Caco-2 (cell line): ENCODE measurements at regions of chr19 and their contacts with region 1.

Region 1: GRCh38 chr19:45862564-45863334 is at the start of gene SYMPK:
- DNase-seq: peak; percentile 99
- H3K4me3 ChIP-seq: peak within 1 kb of the TSS; percentile 67
- H3K4me3 Mint-ChIP-seq: peak within 1 kb of the TSS; percentile 98
- H3K27ac Mint-ChIP-seq: peak within 1 kb of the TSS; percentile 95
- H3K4me1 ChIP-seq: no peaks in the 10 kb centered on the region
- H3K4me1 Mint-ChIP-seq: peaks cover 14% of the 10 kb centered on the region
- H3K27me3 ChIP-seq: no peaks in the 10 kb centered on the region
- H3K27me3 Mint-ChIP-seq: no peaks in the 10 kb centered on the region
- CTCF ChIP-seq: no peak
- total RNA-seq, gene SYMPK: 81.8 and 85.0 TPM in 2 replicates

Region 2: GRCh38 chr19:45439569-45440254 is 423.0 kb before region 1 on chr19:
- CTCF ChIA-PET with region 1: no interaction called
- POLR2A ChIA-PET with region 1: no interaction called
- intact Hi-C with region 1: no loop called
- DNase-seq: peak; percentile 69 to 89
- H3K4me3 ChIP-seq: peak overlapping the region; percentile 61
- H3K4me3 Mint-ChIP-seq: peak overlapping the region; percentile 84
- H3K27ac Mint-ChIP-seq: peak overlapping the region; percentile 88
- H3K4me1 ChIP-seq: peaks cover 20% of the 10 kb centered on the region
- H3K4me1 Mint-ChIP-seq: peaks cover 21% of the 10 kb centered on the region
- H3K27me3 ChIP-seq: no peaks in the 10 kb centered on the region
- H3K27me3 Mint-ChIP-seq: no peaks in the 10 kb centered on the region
- CTCF ChIP-seq: peak; percentile 95 to 99

Region 3: DNA sequence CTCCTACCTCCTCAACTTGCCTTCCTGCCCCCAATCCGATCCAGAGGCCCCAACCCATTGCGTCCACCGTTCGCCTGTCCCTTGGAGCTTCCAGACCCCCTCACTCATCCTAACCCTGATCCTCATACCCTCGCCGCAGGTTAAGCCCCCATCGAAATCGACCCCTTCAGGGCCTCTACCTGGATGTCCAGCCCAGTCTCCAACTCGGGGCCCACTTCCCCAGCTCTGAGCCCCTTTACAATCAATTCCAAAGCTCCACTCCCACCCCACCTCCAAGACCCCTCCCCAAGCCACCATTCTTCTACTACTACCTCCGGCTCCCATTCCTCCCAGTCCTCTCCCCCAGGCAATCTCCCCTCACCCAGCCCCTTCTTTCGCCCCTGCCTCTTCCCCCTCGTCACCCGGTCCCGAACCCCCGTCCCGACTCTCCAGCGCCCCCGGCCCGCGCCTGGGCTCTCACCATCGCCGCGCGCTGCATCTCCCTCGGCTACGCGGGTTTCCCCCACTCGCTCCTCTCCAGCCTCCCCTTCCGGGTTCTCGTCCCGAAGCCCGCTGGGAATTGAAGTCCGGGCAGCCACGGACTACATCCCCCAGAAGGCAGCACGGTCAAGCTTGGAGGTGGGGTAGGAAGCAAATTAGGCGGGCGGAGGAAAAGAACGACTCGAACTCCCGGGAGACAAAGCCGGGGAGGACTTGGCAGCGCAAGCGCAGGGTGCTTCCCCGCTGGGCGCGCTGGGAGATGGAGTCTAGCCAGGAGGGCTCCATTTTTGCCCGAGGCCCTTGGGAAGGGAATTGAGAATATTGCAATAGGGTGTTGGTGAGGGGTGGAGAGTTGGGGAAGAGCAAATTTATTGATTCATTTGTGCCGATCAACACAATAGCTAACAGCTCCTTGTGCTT is 132.1 kb before region 1 on chr19 and contains the start of gene FBXO46:
- CTCF ChIA-PET with region 1: no interaction called
- POLR2A ChIA-PET with region 1: no interaction called
- intact Hi-C with region 1: loop called (anchors 2 kb)
- DNase-seq: peak; percentile 97 to 99
- H3K4me3 ChIP-seq: peak within 1 kb of the TSS; percentile 57
- H3K4me3 Mint-ChIP-seq: peak within 1 kb of the TSS; percentile 86
- H3K27ac Mint-ChIP-seq: peak within 1 kb of the TSS; percentile 73
- H3K4me1 ChIP-seq: peaks cover under 1% of the 10 kb centered on the region
- H3K4me1 Mint-ChIP-seq: peaks cover 8% of the 10 kb centered on the region
- H3K27me3 ChIP-seq: no peaks in the 10 kb centered on the region
- H3K27me3 Mint-ChIP-seq: no peaks in the 10 kb centered on the region
- CTCF ChIP-seq: peak in 1 of 2 experiments; percentile 44
- total RNA-seq, gene FBXO46: 31.0 and 37.0 TPM in 2 replicates

Region 4: DNA sequence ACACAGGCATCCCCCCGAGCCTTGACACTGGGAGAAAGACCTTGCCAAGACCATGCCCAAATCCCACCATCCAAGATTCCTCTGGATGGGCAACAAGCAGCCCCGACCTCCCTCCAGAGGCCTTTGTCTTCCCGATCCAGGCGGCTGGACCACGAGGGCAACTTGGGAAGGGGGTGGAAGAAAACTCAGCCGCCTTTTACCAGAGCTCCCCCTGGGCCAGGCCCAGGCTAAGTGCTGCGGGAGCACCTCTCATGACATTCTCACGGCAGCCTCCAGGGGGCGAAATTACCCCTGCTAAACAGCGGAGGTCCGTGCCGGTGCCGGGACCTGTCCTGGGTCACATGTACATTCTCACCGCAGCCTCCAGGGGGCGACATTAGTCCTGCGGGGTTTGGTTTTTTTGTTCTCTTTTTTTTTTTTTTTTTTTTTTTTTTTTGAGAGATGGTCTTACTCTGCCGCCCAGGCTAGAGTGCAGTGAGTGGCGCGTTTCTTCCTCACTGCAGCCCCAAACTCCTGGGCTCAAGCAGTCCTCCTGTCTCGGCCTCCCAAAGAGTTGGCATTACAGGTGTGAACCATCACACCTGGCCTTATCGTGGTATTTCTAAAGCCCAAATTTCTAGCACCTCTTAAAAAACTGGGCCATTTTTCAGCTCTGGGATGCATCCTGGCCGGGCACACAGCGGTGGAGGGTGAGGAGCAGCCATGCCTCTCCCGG is 45.6 kb before region 1 on chr19:
- CTCF ChIA-PET with region 1: interaction called, 27 read pairs
- POLR2A ChIA-PET with region 1: interaction called, 3 read pairs
- intact Hi-C with region 1: no loop called
- DNase-seq: peak; percentile 96 to 98
- H3K4me3 ChIP-seq: no peak overlapping the region
- H3K4me3 Mint-ChIP-seq: no peak overlapping the region
- H3K27ac Mint-ChIP-seq: no peak overlapping the region
- H3K4me1 ChIP-seq: peaks cover 6% of the 10 kb centered on the region; the same call in 1 of the 2 replicates
- H3K4me1 Mint-ChIP-seq: peaks cover 14% of the 10 kb centered on the region
- H3K27me3 ChIP-seq: no peaks in the 10 kb centered on the region
- H3K27me3 Mint-ChIP-seq: no peaks in the 10 kb centered on the region
- CTCF ChIP-seq: peak; percentile 97 to 99

Region 5: DNA sequence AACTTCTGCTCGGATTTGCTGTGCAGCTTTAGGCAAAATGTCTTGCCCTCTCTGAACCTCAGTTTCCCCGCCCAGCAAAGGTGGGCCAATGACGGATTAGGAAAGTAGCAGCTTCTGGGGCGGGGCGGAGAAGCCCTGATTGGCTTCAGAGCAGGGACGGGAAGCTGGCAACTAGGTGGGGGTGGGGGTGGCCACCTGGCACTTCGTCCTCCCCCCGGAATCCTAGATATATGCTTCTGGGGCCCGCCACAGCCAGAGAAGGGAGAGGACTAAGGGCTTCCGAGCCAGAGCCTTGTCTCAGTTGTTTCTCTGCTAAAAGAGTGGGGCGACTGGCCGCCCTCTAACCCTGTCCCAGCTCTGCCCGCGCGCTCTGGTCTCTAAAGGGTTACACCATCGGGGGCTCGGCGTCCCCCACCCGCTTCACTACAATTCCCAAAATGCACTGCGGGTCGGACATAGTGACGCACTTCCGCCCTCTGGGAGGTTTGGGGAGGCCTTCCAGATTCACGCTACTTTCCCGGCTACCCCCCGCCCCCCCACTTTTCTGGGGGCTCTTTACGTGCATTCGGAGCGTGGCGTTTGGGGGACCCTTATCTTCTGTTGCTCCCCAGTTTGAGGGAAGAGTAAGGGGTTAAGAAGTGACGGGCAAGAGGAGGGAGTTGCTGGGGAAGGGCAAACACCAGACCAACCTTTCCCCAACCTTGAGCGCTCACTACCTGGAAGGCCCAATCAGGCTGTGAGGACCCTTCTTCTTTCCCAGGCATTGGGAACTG is 23.9 kb after region 1 on chr19:
- CTCF ChIA-PET with region 1: interaction called, 86 read pairs
- POLR2A ChIA-PET with region 1: interaction called, 84 read pairs
- intact Hi-C with region 1: loop called (anchors 1 kb)
- DNase-seq: peak; percentile 93 to 94
- H3K4me3 ChIP-seq: peak overlapping the region; percentile 84
- H3K4me3 Mint-ChIP-seq: peak overlapping the region; percentile 93
- H3K27ac Mint-ChIP-seq: peak overlapping the region; percentile 95
- H3K4me1 ChIP-seq: peaks cover 13% of the 10 kb centered on the region
- H3K4me1 Mint-ChIP-seq: peaks cover 12% of the 10 kb centered on the region
- H3K27me3 ChIP-seq: no peaks in the 10 kb centered on the region
- H3K27me3 Mint-ChIP-seq: no peaks in the 10 kb centered on the region
- CTCF ChIP-seq: no peak

Region 6: DNA sequence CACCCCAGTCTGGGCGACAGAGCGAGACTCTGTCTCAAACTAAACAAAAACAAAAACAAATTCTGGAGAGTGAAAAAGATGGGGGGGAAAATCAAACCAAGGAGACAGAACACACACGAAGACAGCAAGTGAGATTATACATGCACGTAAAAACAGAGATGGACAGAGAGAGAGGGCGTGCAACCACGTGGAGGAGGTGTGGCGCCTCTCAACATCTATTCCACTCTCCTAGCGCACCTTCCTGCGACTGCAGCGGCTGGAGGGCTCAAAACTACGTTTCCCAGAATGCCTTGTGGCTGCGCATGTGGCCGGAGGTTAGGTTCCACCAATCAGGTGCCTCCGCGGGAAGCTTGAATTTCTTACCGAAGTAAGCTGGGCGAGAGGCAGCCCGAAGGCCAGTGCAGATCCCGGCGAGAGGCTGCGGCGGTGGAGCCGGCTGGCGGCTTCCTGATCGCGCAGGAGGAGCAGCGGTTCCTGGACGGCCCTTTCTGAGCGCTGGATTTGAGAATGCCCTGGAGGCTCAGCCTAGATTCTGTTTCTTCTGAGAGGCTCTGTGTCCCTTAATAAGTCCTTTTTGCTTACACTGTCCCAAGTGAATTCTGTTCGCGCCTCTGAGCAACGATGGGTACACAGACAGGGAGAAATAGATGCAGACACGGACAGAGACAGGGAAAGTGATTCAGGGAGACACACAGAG is 65.0 kb after region 1 on chr19:
- CTCF ChIA-PET with region 1: interaction called, 5 read pairs
- POLR2A ChIA-PET with region 1: interaction called, 3 read pairs
- intact Hi-C with region 1: loop called (anchors 1 kb)
- DNase-seq: peak; percentile 96 to 97
- H3K4me3 ChIP-seq: peak overlapping the region; percentile 20
- H3K4me3 Mint-ChIP-seq: peak overlapping the region; percentile 68
- H3K27ac Mint-ChIP-seq: peak overlapping the region; percentile 13
- H3K4me1 ChIP-seq: peaks cover 5% of the 10 kb centered on the region
- H3K4me1 Mint-ChIP-seq: peaks cover 21% of the 10 kb centered on the region
- H3K27me3 ChIP-seq: no peaks in the 10 kb centered on the region
- H3K27me3 Mint-ChIP-seq: peaks cover 12% of the 10 kb centered on the region
- CTCF ChIP-seq: peak; percentile 13 to 20